HepG2 (cell line): ENCODE measurements at regions of chr22 and their contacts with region 1.

Region 1: GRCh38 chr22:33247758-33248157 is 189.6 kb upstream of the SYN3 start:
- DNase-seq: no peak
- ATAC-seq: no peak
- H3K4me3 ChIP-seq: no peak overlapping the region
- H3K27ac ChIP-seq: no peak overlapping the region
- H3K4me1 ChIP-seq: no peaks in the 10 kb centered on the region
- H3K27me3 ChIP-seq: 0 out of 5 replicates have a peak, but pooled peaks cover 0 to 2% of the 10 kb centered on the region in 2 experiments
- CTCF ChIP-seq: no peak
- EP300 ChIP-seq: no peak
- POLR2A ChIP-seq: no peak
- RAD21 ChIP-seq: no peak

Region 2: GRCh38 chr22:32951076-32951806 is 296.5 kb before region 1 on chr22:
- CTCF ChIA-PET with region 1: no interaction called
- POLR2A ChIA-PET with region 1: no interaction called
- in situ Hi-C with region 1: no loop called
- intact Hi-C with region 1: no loop called
- DNase-seq: no peak
- ATAC-seq: no peak
- H3K4me3 ChIP-seq: no peak overlapping the region
- H3K27ac ChIP-seq: no peak overlapping the region
- H3K4me1 ChIP-seq: peaks cover 17% of the 10 kb centered on the region
- H3K27me3 ChIP-seq: no peaks in the 10 kb centered on the region
- CTCF ChIP-seq: peak; percentile 16; the same call in 1 of the 2 replicates
- EP300 ChIP-seq: no peak
- POLR2A ChIP-seq: no peak
- RAD21 ChIP-seq: no peak

Region 3: GRCh38 chr22:33288078-33288477 is 40.3 kb after region 1 on chr22:
- CTCF ChIA-PET with region 1: no interaction called
- POLR2A ChIA-PET with region 1: no interaction called
- in situ Hi-C with region 1: no loop called
- intact Hi-C with region 1: no loop called
- DNase-seq: no peak
- ATAC-seq: no peak
- H3K4me3 ChIP-seq: no peak overlapping the region
- H3K27ac ChIP-seq: no peak overlapping the region
- H3K4me1 ChIP-seq: no peaks in the 10 kb centered on the region
- H3K27me3 ChIP-seq: no peaks in the 10 kb centered on the region
- CTCF ChIP-seq: no peak
- EP300 ChIP-seq: no peak
- POLR2A ChIP-seq: no peak
- RAD21 ChIP-seq: no peak

Region 4: GRCh38 chr22:33357981-33358399 is 110.2 kb after region 1 on chr22:
- CTCF ChIA-PET with region 1: no interaction called
- POLR2A ChIA-PET with region 1: no interaction called
- in situ Hi-C with region 1: no loop called
- intact Hi-C with region 1: loop called (anchors 5 kb)
- DNase-seq: no peak
- ATAC-seq: no peak
- H3K4me3 ChIP-seq: no peak overlapping the region
- H3K27ac ChIP-seq: no peak overlapping the region
- H3K4me1 ChIP-seq: peaks cover 20% of the 10 kb centered on the region
- H3K27me3 ChIP-seq: no peaks in the 10 kb centered on the region
- CTCF ChIP-seq: no peak
- EP300 ChIP-seq: no peak
- POLR2A ChIP-seq: no peak
- RAD21 ChIP-seq: no peak